ENCODE measurements at regions of chr10 and their contacts with region 1.

Region 1: GRCh38 chr10:75111367-75111906 is at the start of gene SAMD8:
- DNase-seq: peak; percentile 83
- ATAC-seq: peak; percentile 87
- H3K4me3 ChIP-seq: peak within 1 kb of the TSS; percentile 94
- H3K27ac ChIP-seq: peak within 1 kb of the TSS; percentile 81
- H3K4me1 ChIP-seq: peaks cover 13% of the 10 kb centered on the region
- H3K27me3 ChIP-seq: no peaks in the 10 kb centered on the region
- CTCF ChIP-seq: peak in 2 of 3 experiments; percentile 4 to 13; a peak in 1 of 6 replicates
- EP300 ChIP-seq: peak in 1 of 2 experiments; percentile 2; a peak in 1 of 4 replicates
- POLR2A ChIP-seq: peak; percentile 96
- RAD21 ChIP-seq: no peak
- polyA plus RNA-seq, gene SAMD8: 2.8 to 3.5 TPM

Region 2: DNA sequence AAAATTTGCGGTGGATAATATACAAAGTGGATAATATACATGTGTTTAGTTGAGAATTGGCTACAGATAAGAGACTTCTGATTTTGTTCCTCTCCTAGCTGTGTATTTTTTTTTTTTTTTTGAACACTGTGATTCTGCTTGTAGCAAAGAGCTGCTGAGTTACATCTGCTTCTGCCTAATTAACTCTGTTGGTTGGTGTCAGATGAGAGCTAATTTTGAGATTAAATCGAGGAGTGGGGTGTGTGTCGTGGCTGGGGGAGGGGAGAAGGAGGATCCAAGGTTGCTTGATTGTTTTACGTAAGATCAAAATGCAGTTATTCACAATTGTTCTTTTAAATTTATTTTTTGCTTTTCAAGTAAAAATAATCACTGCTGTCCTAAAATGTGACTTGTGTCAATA is 273.7 kb before region 1 on chr10:
- CTCF ChIA-PET with region 1: no interaction called
- POLR2A ChIA-PET with region 1: no interaction called
- RAD21 ChIA-PET with region 1: no interaction called
- SMC1A ChIA-PET with region 1: no interaction called
- in situ Hi-C with region 1: no loop called
- intact Hi-C with region 1: no loop called
- DNase-seq: no peak
- ATAC-seq: no peak
- H3K4me3 ChIP-seq: no peak overlapping the region
- H3K27ac ChIP-seq: no peak overlapping the region
- H3K4me1 ChIP-seq: peaks cover 7% of the 10 kb centered on the region; the same call in 1 of the 2 replicates
- H3K27me3 ChIP-seq: no peaks in the 10 kb centered on the region
- CTCF ChIP-seq: no peak
- EP300 ChIP-seq: no peak
- POLR2A ChIP-seq: no peak
- RAD21 ChIP-seq: no peak

Region 3: GRCh38 chr10:75127471-75127870 is 16.0 kb after region 1 on chr10:
- CTCF ChIA-PET with region 1: interaction called, 8 read pairs
- POLR2A ChIA-PET with region 1: interaction called, 10 read pairs
- RAD21 ChIA-PET with region 1: interaction called, 5 read pairs
- SMC1A ChIA-PET with region 1: interaction called, 17 read pairs
- in situ Hi-C with region 1: no loop called
- intact Hi-C with region 1: no loop called
- DNase-seq: no peak
- ATAC-seq: no peak
- H3K4me3 ChIP-seq: no peak overlapping the region
- H3K27ac ChIP-seq: no peak overlapping the region
- H3K4me1 ChIP-seq: peaks cover 4% of the 10 kb centered on the region
- H3K27me3 ChIP-seq: no peaks in the 10 kb centered on the region
- CTCF ChIP-seq: no peak
- EP300 ChIP-seq: no peak
- POLR2A ChIP-seq: no peak
- RAD21 ChIP-seq: no peak

Region 4: GRCh38 chr10:75165684-75166622 is 54.5 kb after region 1 on chr10:
- CTCF ChIA-PET with region 1: interaction called, 3 read pairs
- POLR2A ChIA-PET with region 1: interaction called, 6 read pairs
- RAD21 ChIA-PET with region 1: interaction called, 4 read pairs
- SMC1A ChIA-PET with region 1: interaction called, 3 read pairs
- in situ Hi-C with region 1: no loop called
- intact Hi-C with region 1: loop called (anchors 2 kb)
- DNase-seq: peak; percentile 62
- ATAC-seq: peak; percentile 94
- H3K4me3 ChIP-seq: peak overlapping the region; percentile 57
- H3K27ac ChIP-seq: peak overlapping the region; percentile 76
- H3K4me1 ChIP-seq: peaks cover 17% of the 10 kb centered on the region
- H3K27me3 ChIP-seq: no peaks in the 10 kb centered on the region
- CTCF ChIP-seq: no peak
- EP300 ChIP-seq: peak; percentile 44 to 47; a peak in 1 of 4 replicates
- POLR2A ChIP-seq: no peak
- RAD21 ChIP-seq: no peak